ENCODE measurements at regions of chr13 and their contacts with region 1.

Region 1: DNA sequence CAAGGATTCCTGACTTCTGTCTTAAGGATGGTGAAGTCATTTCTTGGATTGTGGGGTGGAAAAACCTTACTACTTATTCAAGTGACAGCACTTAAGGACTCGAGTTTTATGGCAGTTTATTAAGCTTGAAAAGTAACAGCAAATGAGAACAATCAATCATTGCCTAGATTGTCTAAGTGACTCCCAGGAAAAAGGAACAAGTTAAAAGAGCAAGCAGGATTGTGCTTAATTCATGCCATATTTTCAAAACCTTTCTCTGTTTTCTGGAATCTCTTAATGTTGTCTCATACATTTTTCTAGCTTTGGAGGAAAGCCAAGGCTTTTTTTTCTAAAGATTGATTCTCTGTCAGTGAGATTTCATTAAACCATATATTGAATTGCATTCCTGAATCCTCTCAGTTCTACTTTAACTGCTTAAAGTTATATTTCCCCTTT is 236.2 kb upstream of the HTR2A start:
- DNase-seq: no peak
- ATAC-seq: no peak
- H3K4me3 ChIP-seq: no peak overlapping the region
- H3K4me3 Mint-ChIP-seq: no peak overlapping the region
- H3K27ac ChIP-seq: no peak overlapping the region
- H3K27ac Mint-ChIP-seq: no peak overlapping the region
- H3K4me1 ChIP-seq: no peaks in the 10 kb centered on the region
- H3K4me1 Mint-ChIP-seq: no peaks in the 10 kb centered on the region
- H3K27me3 ChIP-seq: no peaks in the 10 kb centered on the region
- H3K27me3 Mint-ChIP-seq: peaks cover 0 to 6% of the 10 kb centered on the region in 2 donors
- CTCF ChIP-seq: no peak

Region 2: GRCh38 chr13:47250146-47250545 is 117.1 kb after region 1 on chr13:
- intact Hi-C with region 1: loop called (anchors 5 kb)
- DNase-seq: no peak
- ATAC-seq: no peak
- H3K4me3 ChIP-seq: no peak overlapping the region
- H3K4me3 Mint-ChIP-seq: no peak overlapping the region
- H3K27ac ChIP-seq: no peak overlapping the region
- H3K27ac Mint-ChIP-seq: no peak overlapping the region
- H3K4me1 ChIP-seq: no peaks in the 10 kb centered on the region
- H3K4me1 Mint-ChIP-seq: no peaks in the 10 kb centered on the region
- H3K27me3 ChIP-seq: no peaks in the 10 kb centered on the region
- H3K27me3 Mint-ChIP-seq: no peaks in the 10 kb centered on the region
- CTCF ChIP-seq: no peak

Region 3: DNA sequence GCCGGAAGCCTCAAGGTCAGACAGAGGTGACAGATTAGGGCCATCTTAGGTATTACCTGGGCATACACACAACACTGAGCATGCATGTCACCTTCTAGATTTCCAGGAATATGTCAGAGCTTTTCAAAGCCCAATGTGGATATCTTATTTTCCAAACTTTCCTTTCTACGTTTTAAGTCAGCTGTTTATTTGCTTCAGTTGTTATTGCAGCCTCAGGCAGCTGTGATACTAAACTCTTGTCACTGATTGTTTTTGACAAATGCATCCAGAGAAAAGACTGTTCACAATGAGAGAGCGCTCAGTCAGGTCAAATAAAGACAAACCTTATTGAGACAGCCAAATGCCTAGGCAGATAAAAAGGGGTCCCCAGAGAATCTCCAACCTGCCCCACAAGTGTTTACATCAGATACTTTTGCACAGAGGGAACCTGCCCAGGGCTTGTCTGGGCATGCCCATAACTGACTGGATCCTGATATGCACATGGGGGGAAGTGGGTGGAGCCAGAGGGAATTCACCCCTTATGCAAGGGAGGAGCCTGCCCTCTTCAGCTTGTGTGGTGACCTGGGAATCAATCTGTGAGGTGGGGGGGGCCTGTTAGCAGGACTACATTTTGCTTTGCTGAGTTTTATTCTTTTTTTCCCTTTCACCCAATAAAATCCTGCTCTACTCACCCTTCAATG is 933.4 kb after region 1 on chr13:
- intact Hi-C with region 1: no loop called
- DNase-seq: peak in 1 of 2 donors; percentile 39
- ATAC-seq: no peak
- H3K4me3 ChIP-seq: no peak overlapping the region
- H3K4me3 Mint-ChIP-seq: no peak overlapping the region
- H3K27ac ChIP-seq: no peak overlapping the region
- H3K27ac Mint-ChIP-seq: no peak overlapping the region
- H3K4me1 ChIP-seq: no peaks in the 10 kb centered on the region
- H3K4me1 Mint-ChIP-seq: peaks cover 4 to 5% of the 10 kb centered on the region in 2 donors
- H3K27me3 ChIP-seq: no peaks in the 10 kb centered on the region
- H3K27me3 Mint-ChIP-seq: no peaks in the 10 kb centered on the region
- CTCF ChIP-seq: no peak